ENCODE measurements at regions of chr10 and their contacts with region 1.

Region 1: GRCh38 chr10:97196223-97197029 is 10.7 kb upstream of the SLIT1 start:
- DNase-seq: peak; percentile 78
- ATAC-seq: peak; percentile 91
- H3K4me3 Mint-ChIP-seq: peak overlapping the region; percentile 77
- H3K27ac Mint-ChIP-seq: no peak overlapping the region
- H3K4me1 Mint-ChIP-seq: peaks cover 13% of the 10 kb centered on the region
- H3K27me3 Mint-ChIP-seq: peaks cover 15% of the 10 kb centered on the region
- CTCF ChIP-seq: peak; percentile 76

Region 2: DNA sequence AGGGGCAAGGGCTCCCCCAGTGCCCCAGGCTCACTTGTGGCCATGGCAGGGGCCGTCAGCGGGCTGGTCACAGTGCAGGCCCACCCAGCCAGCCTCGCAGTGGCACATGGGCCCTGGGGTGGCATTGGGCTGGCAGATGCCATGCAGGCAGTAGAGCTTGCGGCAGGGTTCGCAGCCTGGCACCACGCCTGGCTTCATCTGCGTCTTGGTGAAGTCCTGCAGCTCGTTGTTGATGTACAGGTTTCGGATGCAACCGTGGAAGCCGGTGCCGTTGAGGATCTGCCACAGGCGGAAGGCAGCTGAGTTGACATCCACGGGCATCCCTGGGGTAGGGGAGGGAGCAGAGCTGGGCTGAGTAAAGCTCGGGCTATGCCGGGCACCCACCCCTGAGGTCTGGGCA is 193.8 kb before region 1 on chr10:
- CTCF ChIA-PET with region 1: no interaction called
- POLR2A ChIA-PET with region 1: no interaction called
- DNase-seq: no peak
- ATAC-seq: no peak
- H3K4me3 Mint-ChIP-seq: no peak overlapping the region
- H3K27ac Mint-ChIP-seq: no peak overlapping the region
- H3K4me1 Mint-ChIP-seq: peaks cover 4% of the 10 kb centered on the region
- H3K27me3 Mint-ChIP-seq: peaks cover 2% of the 10 kb centered on the region; the same call in 1 of the 2 replicates
- CTCF ChIP-seq: no peak

Region 3: DNA sequence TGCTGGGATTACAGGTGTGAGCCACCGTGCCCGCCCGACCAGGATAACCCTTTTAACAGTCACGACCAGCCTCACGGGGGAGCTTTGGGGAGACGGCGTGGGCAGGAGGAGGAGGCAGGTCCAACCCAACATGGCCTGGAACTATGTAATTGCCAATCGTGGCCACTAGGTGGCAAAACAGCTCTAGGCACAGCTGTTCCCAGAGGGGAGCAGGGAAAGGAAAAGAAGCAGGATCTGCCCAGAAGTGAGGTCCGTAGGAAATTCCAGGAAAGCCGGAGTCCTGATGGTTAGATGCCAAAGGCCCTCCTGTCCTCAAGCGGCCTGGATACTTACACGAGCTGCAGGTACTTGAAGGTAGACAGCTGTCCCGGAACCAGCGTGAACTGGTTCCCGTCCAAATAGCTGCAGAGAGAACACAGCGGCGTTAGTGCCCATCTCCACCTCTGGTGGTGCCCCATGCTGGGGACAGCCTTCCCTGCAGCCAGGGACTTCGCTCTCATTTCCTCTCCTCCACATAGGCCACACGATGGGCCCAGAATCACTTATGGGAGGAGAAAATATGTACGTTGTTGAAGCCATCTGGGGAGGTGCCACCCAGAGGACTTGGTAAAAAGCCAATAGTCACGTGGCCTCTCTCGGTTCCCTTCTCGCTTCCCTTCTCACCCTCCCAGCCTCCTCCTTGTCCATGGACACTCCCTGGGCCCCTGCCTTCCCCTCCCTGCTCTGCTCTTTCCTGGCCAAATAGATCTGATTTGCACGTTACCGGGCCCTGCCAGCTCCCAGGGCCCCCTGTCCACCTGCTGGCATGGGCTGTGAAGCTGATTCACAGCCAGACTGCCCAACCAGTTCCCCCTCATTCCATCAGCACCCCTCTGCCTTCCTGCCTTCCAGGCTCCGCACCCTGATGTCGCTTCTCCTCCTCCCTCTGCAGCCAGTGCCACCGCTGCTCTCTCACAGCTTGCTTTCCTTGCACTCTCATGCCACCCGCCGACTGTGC is 158.8 kb before region 1 on chr10:
- CTCF ChIA-PET with region 1: interaction called, 21 read pairs
- POLR2A ChIA-PET with region 1: no interaction called
- DNase-seq: peak; percentile 95
- ATAC-seq: peak; percentile 94
- H3K4me3 Mint-ChIP-seq: peak overlapping the region; percentile 45
- H3K27ac Mint-ChIP-seq: no peak overlapping the region
- H3K4me1 Mint-ChIP-seq: peaks cover 28% of the 10 kb centered on the region
- H3K27me3 Mint-ChIP-seq: peaks cover 5% of the 10 kb centered on the region
- CTCF ChIP-seq: peak; percentile 92

Region 4: DNA sequence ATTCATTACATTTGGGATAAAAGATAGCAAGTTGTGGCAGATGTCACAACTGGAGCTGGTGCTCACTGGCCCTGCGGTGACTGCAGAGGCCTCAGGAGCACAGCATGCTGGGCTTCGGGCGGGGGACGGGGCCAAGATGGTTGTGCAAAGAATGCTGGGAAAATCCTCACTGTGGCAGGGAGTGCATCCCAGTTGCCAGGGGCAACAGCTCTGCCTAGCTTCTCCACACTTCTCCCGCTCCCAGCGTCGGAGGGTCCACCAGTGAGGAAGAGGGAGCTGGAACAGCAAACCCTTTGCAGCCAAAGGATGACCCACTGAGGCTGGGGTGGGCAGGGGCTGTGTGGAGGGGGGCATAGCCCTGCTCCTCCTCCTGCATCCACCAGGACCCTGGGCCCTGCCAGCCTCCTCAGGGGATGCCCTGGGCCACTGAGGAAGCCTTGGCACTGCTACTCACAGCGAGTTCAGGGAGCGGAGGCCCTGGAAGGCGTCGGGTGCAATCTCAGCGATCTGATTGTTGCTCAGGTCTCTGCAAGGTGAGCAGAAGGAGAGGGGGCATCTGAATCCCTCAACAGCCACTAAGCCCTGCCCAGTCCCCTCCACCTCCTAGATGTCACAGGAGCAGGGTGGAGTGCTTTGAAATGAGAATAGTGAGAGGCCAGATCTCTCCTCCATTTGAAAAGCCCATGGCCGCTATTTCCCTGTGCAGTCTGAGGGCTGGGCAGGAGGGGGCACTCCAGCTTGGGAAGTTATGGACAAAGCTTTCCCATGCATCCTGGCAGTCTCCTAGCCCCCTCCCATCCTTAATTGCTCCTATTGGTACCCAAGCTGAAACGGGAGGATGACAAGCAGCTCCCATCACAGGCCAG is 137.2 kb before region 1 on chr10:
- CTCF ChIA-PET with region 1: interaction called, 12 read pairs
- POLR2A ChIA-PET with region 1: no interaction called
- DNase-seq: peak; percentile 66
- ATAC-seq: peak; percentile 89
- H3K4me3 Mint-ChIP-seq: no peak overlapping the region
- H3K27ac Mint-ChIP-seq: no peak overlapping the region
- H3K4me1 Mint-ChIP-seq: peaks cover 8% of the 10 kb centered on the region
- H3K27me3 Mint-ChIP-seq: no peaks in the 10 kb centered on the region
- CTCF ChIP-seq: no peak

Region 5: GRCh38 chr10:97138174-97138573 is 58.3 kb before region 1 on chr10:
- CTCF ChIA-PET with region 1: interaction called, 13 read pairs
- POLR2A ChIA-PET with region 1: no interaction called
- DNase-seq: peak; percentile 60
- ATAC-seq: peak; percentile 74
- H3K4me3 Mint-ChIP-seq: no peak overlapping the region
- H3K27ac Mint-ChIP-seq: no peak overlapping the region
- H3K4me1 Mint-ChIP-seq: peaks cover 22% of the 10 kb centered on the region
- H3K27me3 Mint-ChIP-seq: no peaks in the 10 kb centered on the region; the same call in 1 of the 2 replicates
- CTCF ChIP-seq: no peak; the same call in 1 of the 2 replicates

Region 6: GRCh38 chr10:97179731-97180362 is 16.6 kb before region 1 on chr10:
- CTCF ChIA-PET with region 1: interaction called, 65 read pairs
- POLR2A ChIA-PET with region 1: no interaction called
- DNase-seq: peak; percentile 82
- ATAC-seq: peak; percentile 97
- H3K4me3 Mint-ChIP-seq: peak overlapping the region; percentile 57
- H3K27ac Mint-ChIP-seq: no peak overlapping the region
- H3K4me1 Mint-ChIP-seq: peaks cover 15% of the 10 kb centered on the region
- H3K27me3 Mint-ChIP-seq: peaks cover 36% of the 10 kb centered on the region
- CTCF ChIP-seq: no peak

Region 7: GRCh38 chr10:97185326-97186058 is 10.9 kb before region 1 on chr10 and contains the start of gene SLIT1:
- CTCF ChIA-PET with region 1: interaction called, 65 read pairs
- POLR2A ChIA-PET with region 1: no interaction called
- DNase-seq: peak; percentile 61
- ATAC-seq: peak; percentile 71
- H3K4me3 Mint-ChIP-seq: peak within 1 kb of the TSS; percentile 81
- H3K27ac Mint-ChIP-seq: no peak within 1 kb of the TSS
- H3K4me1 Mint-ChIP-seq: peaks cover 20% of the 10 kb centered on the region
- H3K27me3 Mint-ChIP-seq: peaks cover 67% of the 10 kb centered on the region
- CTCF ChIP-seq: no peak
- total RNA-seq, gene SLIT1: 1.1 to 1.6 TPM (median 1.4 TPM) in 3 replicates

Region 8: DNA sequence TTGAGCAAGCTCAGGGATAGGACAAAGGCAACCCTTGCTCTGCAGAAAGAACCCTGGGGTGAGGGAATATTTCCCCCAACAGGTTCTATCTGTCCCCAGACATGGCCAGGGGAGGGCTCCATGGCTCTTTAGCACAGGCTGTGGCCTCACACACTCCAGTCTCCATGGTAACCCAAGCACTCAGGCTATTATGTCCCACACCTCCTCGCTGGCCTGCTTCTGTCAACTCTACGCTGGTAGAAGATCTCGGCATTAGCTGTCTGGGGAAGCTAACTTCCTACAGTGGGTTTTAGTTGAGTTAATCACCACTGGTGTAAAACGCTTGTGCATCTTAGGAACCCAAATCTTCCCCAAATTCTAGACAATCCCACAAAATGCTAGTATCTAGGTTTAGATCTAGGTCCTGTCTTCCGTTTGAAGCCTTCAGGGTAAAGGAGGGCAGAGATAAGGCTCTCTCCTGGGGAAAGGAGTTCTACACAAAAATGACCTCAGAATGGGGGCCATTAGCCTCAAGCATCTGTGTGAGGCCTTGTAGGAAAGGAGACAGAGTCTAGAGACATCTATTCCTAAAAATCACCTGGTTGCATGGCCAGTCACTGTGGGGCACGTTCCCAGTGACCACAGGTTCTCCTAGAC is 26.0 kb after region 1 on chr10:
- CTCF ChIA-PET with region 1: interaction called, 13 read pairs
- POLR2A ChIA-PET with region 1: no interaction called
- DNase-seq: peak; percentile 54
- ATAC-seq: peak; percentile 99
- H3K4me3 Mint-ChIP-seq: no peak overlapping the region
- H3K27ac Mint-ChIP-seq: no peak overlapping the region
- H3K4me1 Mint-ChIP-seq: peaks cover 9% of the 10 kb centered on the region
- H3K27me3 Mint-ChIP-seq: no peaks in the 10 kb centered on the region
- CTCF ChIP-seq: no peak